Activated T-helper 1 cell treated with anti-CD3 and anti-CD28 coated beads, Interleukin-12 subunit alpha, Interleukin-12 subunit beta, Interleukin-2, Interleukin-4 antibody, amounts not matched to agents 30 ng/mL and 10 ng/mL and 1 ng/mL, durations not matched to agents 14 hours and 24 hours and 36 hours (primary cell): ENCODE measurements at regions of chr2 and their contacts with region 1.

Region 1: DNA sequence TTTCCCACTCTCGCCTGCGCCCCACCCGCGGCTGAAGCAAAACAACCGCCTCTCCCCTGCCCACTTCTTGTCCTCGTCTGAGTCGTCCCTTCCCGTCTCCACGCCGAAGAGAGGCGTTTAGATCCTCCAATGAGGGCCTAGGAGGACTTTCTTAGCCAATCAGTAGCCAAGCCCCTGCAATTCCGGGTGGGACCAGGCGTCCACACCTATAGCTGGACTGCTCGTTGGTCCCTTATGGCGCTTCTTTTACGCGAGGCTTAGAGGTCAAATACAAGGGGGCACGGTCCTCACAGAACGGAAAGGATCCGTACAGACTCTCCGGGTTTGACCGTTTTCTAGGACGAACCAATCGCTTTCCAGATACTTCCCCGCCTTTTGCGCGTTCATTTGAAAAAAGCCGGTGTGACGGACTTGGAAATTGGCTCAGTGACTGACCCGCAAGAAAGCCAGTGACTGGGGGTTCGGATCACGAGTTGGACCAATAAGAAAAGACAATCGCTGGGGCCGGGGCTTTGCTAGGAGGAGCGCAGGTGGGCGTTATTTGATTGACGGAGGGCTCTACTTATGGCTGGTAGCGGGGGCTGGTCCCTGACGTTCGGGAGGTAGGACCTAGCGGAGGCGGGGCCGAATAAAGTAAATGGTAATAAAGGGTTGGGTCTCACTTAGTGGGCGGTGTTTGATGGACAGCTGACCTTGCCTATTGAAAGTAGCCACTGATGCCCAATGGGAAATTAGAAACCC is 565 bp upstream of the PPM1B start:
- DNase-seq: peak; percentile 94
- H3K4me3 Mint-ChIP-seq: peak overlapping the region; percentile 97
- H3K27ac Mint-ChIP-seq: peak overlapping the region; percentile 99
- H3K4me1 Mint-ChIP-seq: peaks cover 41% of the 10 kb centered on the region
- H3K27me3 Mint-ChIP-seq: peaks cover 2% of the 10 kb centered on the region

Region 2: GRCh38 chr2:43595603-43596412 is 572.3 kb before region 1 on chr2 and contains the start of gene THADA:
- intact Hi-C with region 1: loop called (anchors 1 kb)
- DNase-seq: peak; percentile 97
- H3K4me3 Mint-ChIP-seq: peak within 1 kb of the TSS; percentile 96
- H3K27ac Mint-ChIP-seq: peak within 1 kb of the TSS; percentile 98
- H3K4me1 Mint-ChIP-seq: peaks cover 42% of the 10 kb centered on the region
- H3K27me3 Mint-ChIP-seq: peaks cover 2% of the 10 kb centered on the region
- total RNA-seq, gene THADA: 49.8 and 51.7 TPM in 2 replicates

Region 3: DNA sequence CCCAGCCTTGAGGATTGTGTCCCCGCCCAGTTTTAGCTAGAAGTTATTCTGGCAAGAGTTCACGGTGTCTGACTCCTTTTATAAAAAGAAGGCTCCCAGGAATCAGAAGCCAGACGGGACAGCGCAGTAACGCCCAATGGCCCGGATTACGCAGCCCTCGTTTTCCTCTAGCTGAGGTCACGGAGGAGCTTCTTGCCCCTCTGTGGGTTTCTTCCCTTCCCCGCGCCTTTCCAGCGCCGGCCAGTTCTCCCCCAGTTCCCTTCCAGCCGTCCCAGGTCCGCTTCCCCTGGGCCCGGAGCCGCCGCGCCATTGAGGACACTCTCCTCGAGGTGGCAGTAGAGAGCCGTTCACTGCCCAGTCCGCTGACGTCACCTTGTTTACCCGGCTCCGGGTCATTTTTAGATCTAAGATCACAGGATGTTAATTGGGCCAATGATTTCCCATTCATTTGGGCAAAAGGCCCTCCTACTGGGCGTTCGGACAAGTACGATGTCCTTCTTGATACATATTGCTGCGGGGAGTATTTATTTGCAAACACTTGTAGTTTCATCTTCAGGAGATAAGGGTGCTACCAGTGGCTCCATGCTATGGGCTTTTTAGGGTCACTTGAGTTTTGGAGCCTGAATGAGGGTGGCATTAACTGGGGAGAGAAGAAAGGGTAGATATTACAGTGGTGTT is 80.9 kb before region 1 on chr2:
- intact Hi-C with region 1: loop called (anchors 1 kb)
- DNase-seq: peak; percentile 77
- H3K4me3 Mint-ChIP-seq: peak overlapping the region; percentile 76
- H3K27ac Mint-ChIP-seq: peak overlapping the region; percentile 81
- H3K4me1 Mint-ChIP-seq: peaks cover 23% of the 10 kb centered on the region
- H3K27me3 Mint-ChIP-seq: no peaks in the 10 kb centered on the region

Region 4: DNA sequence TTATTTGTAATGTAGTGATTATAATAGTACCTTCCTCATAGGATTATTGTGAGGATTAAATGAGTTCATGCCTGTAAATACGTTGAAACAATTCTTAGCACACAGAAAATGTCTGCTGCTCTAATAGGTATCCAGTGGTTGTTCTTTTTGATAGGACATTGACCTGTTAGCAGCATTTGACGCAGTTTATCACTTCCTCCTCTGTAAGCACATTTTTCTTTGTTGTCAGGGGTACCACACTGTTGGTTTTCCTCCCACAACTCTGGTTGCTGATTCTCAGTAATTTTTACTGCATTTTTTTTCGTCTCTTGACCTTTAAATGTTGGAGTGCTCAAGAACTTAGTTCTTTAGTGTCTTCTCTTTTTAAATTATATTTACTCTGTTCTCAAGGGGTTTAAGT is 16.0 kb after region 1 on chr2:
- intact Hi-C with region 1: loop called (anchors 2 kb)
- DNase-seq: no peak
- H3K4me3 Mint-ChIP-seq: peak overlapping the region; percentile 53
- H3K27ac Mint-ChIP-seq: peak overlapping the region; percentile 53
- H3K4me1 Mint-ChIP-seq: peaks cover 50% of the 10 kb centered on the region
- H3K27me3 Mint-ChIP-seq: no peaks in the 10 kb centered on the region

Region 5: GRCh38 chr2:44218771-44219170 is 50.7 kb after region 1 on chr2:
- intact Hi-C with region 1: loop called (anchors 5 kb)
- DNase-seq: no peak
- H3K4me3 Mint-ChIP-seq: no peak overlapping the region
- H3K27ac Mint-ChIP-seq: no peak overlapping the region
- H3K4me1 Mint-ChIP-seq: peaks cover 10% of the 10 kb centered on the region
- H3K27me3 Mint-ChIP-seq: no peaks in the 10 kb centered on the region

Region 6: GRCh38 chr2:44361330-44362206 is 193.5 kb after region 1 on chr2 and contains the starts of genes CAMKMT and PREPL:
- intact Hi-C with region 1: loop called (anchors 1 kb)
- DNase-seq: peak; percentile 97
- H3K4me3 Mint-ChIP-seq: peak within 1 kb of the TSS; percentile 99
- H3K27ac Mint-ChIP-seq: peak within 1 kb of the TSS; percentile 100
- H3K4me1 Mint-ChIP-seq: peaks cover 46% of the 10 kb centered on the region
- H3K27me3 Mint-ChIP-seq: no peaks in the 10 kb centered on the region
- total RNA-seq, gene CAMKMT: 13.4 and 14.2 TPM in 2 replicates
- total RNA-seq, gene PREPL: 29.4 and 30.5 TPM in 2 replicates

Region 7: GRCh38 chr2:45650851-45651414 is 1482.8 kb after region 1 on chr2:
- intact Hi-C with region 1: loop called (anchors 2 kb)
- DNase-seq: peak; percentile 88
- H3K4me3 Mint-ChIP-seq: peak overlapping the region; percentile 90
- H3K27ac Mint-ChIP-seq: peak overlapping the region; percentile 94
- H3K4me1 Mint-ChIP-seq: peaks cover 28% of the 10 kb centered on the region
- H3K27me3 Mint-ChIP-seq: peaks cover 32% of the 10 kb centered on the region